ENCODE measurements at regions of chr10 and their contacts with region 1.

Region 1: GRCh38 chr10:117537436-117537903 is 5.1 kb upstream of the EMX2 start:
- DNase-seq: no peak
- H3K4me3 Mint-ChIP-seq: no peak overlapping the region
- H3K27ac Mint-ChIP-seq: no peak overlapping the region
- H3K4me1 Mint-ChIP-seq: no peaks in the 10 kb centered on the region
- H3K27me3 Mint-ChIP-seq: peaks cover 76% of the 10 kb centered on the region

Region 2: DNA sequence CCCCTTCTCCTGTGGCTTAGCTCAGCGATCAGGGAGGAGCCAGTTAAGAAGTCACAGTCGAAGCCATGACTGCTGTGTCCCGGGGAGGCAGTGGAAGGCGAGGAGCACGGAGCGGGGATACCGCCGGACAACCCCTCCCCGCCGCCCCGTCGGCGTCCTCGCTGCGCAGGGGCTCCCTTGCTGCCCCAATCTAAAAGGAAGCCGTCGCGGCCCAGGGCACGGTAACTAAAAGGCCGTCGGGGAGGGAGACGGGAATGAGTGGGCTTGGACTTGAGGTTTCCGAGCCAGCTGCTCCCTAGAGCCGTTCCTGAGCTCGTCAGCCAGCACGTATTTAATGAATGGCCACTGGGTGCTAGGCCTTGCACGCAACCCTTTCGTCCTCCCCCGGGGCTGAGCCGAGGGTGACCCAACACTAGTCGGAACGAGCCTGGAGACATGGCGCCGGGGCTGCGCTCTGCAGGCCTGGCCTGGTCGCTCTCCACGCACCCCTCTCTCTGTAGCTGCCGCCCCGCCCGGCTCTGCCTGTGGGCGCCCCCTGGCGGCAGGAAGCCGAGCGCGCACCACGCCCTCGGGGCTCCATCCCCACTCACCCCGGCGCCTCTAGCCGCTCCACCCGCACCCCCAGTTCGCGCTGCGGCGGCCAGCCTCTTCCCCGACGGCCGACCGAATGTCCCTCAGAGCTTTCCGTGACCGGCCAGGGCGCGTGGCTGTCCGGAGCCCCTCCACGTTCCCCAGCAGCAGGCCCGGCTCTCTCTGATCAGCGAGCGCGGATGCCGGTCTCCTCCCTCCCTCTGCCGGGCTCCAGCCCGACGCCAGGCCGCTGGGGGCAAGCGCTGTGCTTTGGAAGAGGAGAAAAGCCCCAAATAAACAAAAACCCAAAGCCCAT is 369.4 kb before region 1 on chr10:
- intact Hi-C with region 1: loop called (anchors 2 kb)
- DNase-seq: peak; percentile 39
- H3K4me3 Mint-ChIP-seq: no peak overlapping the region
- H3K27ac Mint-ChIP-seq: no peak overlapping the region
- H3K4me1 Mint-ChIP-seq: peaks cover 7% of the 10 kb centered on the region
- H3K27me3 Mint-ChIP-seq: peaks cover 73% of the 10 kb centered on the region

Region 3: GRCh38 chr10:117552156-117552631 is 14.7 kb after region 1 on chr10:
- intact Hi-C with region 1: loop called (anchors 2 kb)
- DNase-seq: no peak
- H3K4me3 Mint-ChIP-seq: no peak overlapping the region
- H3K27ac Mint-ChIP-seq: peak overlapping the region; percentile 73
- H3K4me1 Mint-ChIP-seq: peaks cover 9% of the 10 kb centered on the region
- H3K27me3 Mint-ChIP-seq: peaks cover 80% of the 10 kb centered on the region

Region 4: DNA sequence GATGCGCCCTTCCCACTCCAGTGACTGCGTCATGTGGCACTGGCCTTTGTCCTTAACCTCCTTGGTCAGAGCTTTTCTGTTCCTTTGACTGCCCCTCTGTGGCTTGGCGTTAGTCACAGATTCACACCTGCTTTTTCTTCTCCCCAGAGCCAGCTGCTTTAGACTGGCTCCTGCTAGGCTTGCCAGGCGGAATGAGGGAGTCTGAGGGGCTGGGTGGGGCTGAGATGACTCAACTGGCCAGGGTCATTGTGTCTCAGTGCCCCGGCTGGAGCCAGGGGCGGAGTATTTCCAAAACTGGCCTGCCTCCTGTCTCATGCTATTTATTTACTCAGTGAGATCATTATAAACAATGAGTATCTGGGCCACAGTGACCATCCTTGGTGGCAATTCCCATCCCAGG is 199.2 kb after region 1 on chr10:
- intact Hi-C with region 1: loop called (anchors 10 kb)
- DNase-seq: no peak
- H3K4me3 Mint-ChIP-seq: no peak overlapping the region
- H3K27ac Mint-ChIP-seq: no peak overlapping the region
- H3K4me1 Mint-ChIP-seq: no peaks in the 10 kb centered on the region
- H3K27me3 Mint-ChIP-seq: peaks cover 35% of the 10 kb centered on the region

Region 5: GRCh38 chr10:118210276-118210675 is 672.8 kb after region 1 on chr10:
- intact Hi-C with region 1: no loop called
- DNase-seq: no peak
- H3K4me3 Mint-ChIP-seq: no peak overlapping the region
- H3K27ac Mint-ChIP-seq: no peak overlapping the region
- H3K4me1 Mint-ChIP-seq: no peaks in the 10 kb centered on the region
- H3K27me3 Mint-ChIP-seq: peaks cover 9% of the 10 kb centered on the region

Measured in activated T-helper 1 cell treated with anti-CD3 and anti-CD28 coated beads, Interleukin-12 subunit alpha, Interleukin-12 subunit beta, Interleukin-2, Interleukin-4 antibody, amounts not matched to agents 30 ng/mL and 10 ng/mL and 1 ng/mL, durations not matched to agents 14 hours and 24 hours and 36 hours (primary cell).